ENCODE measurements at regions of chr13 and their contacts with region 1.

Region 1: DNA sequence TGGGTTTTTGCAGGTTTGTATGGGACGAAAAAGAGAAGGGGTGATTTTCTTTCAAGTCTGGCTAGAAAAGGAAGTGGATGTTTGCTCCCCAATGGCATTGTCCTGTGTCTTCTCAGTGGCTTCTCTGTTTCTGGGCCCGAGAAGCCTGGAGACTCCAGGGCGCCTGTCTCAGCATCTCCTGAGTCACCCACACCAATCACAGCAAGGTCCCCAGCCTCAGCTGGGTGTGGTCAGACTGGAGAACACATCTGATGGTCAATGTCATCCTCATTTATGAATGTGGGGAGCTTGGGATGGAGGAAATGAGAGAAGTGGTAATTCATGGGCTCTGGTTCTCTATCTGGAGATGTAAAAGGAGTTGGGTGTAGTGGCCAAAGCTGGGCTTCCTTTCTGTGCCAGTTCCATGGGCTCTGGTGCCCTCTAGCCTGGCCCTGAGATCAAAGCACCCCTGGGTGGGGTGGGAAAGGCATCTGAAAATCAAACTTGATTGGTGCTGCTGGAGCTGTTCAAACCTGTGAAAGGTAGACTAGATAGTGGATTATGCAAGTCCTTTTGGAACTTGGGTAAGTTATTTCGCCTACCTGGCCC is 13.4 kb downstream of the RASL11A start:
- DNase-seq: no peak
- ATAC-seq: peak; percentile 71 to 83 (median 78)
- H3K4me3 ChIP-seq: no peak overlapping the region
- H3K27ac ChIP-seq: no peak overlapping the region
- H3K4me1 ChIP-seq: no peaks in the 10 kb centered on the region
- H3K27me3 ChIP-seq: no peaks in the 10 kb centered on the region
- CTCF ChIP-seq: peak in 11 of 12 donors; percentile 19 to 60 (median 40)
- POLR2A ChIP-seq: no peak

Region 2: GRCh38 chr13:26946684-26947343 is 337.2 kb before region 1 on chr13:
- intact Hi-C with region 1: loop called in 1 of 10 experiments (anchors 5 kb)
- DNase-seq: no peak
- ATAC-seq: peak; percentile 71 to 81 (median 78)
- H3K4me3 ChIP-seq: no peak overlapping the region
- H3K27ac ChIP-seq: no peak overlapping the region
- H3K4me1 ChIP-seq: peaks cover 0 to 11% (median 1%) of the 10 kb centered on the region in 12 donors
- H3K27me3 ChIP-seq: no peaks in the 10 kb centered on the region
- CTCF ChIP-seq: peak; percentile 58 to 85 (median 76)
- POLR2A ChIP-seq: no peak